ENCODE measurements at regions of chr9 and their contacts with region 1.

Region 1: DNA sequence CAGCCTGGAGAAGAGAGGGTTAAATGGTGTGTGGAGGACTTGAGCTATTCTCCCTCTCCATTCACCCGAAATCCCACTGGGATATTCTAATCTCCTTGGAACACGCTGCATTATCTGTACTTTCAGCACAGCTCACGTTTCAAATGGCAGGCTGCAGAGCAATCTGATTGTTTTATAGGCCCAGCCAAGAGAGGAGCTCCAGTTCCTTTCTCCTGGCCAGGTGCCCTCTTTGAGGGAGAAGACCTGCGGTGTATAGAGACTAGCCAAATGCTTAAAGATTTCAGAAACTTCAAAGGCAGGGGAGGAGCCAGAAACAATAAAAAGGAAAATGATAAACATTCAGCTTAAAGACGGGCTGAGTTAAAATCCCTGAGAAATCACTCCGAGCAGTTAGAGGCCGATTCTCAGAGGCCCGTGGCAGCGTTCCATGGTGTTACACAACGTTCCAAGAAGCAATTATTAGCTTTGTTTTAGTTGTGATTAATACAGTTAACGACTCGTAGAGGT is 564.0 kb upstream of the KLF4 start:
- DNase-seq: peak; percentile 92
- H3K4me3 ChIP-seq: no peak overlapping the region
- H3K27ac ChIP-seq: peak overlapping the region; percentile 59 to 77 (median 74)
- H3K4me1 ChIP-seq: peaks cover 0 to 68% (median 57%) of the 10 kb centered on the region in 4 donors
- H3K27me3 ChIP-seq: no peaks in the 10 kb centered on the region
- CTCF ChIP-seq: no peak
- EP300 ChIP-seq: peak in 2 of 4 donors; percentile 45 to 56
- POLR2A ChIP-seq: no peak

Region 2: DNA sequence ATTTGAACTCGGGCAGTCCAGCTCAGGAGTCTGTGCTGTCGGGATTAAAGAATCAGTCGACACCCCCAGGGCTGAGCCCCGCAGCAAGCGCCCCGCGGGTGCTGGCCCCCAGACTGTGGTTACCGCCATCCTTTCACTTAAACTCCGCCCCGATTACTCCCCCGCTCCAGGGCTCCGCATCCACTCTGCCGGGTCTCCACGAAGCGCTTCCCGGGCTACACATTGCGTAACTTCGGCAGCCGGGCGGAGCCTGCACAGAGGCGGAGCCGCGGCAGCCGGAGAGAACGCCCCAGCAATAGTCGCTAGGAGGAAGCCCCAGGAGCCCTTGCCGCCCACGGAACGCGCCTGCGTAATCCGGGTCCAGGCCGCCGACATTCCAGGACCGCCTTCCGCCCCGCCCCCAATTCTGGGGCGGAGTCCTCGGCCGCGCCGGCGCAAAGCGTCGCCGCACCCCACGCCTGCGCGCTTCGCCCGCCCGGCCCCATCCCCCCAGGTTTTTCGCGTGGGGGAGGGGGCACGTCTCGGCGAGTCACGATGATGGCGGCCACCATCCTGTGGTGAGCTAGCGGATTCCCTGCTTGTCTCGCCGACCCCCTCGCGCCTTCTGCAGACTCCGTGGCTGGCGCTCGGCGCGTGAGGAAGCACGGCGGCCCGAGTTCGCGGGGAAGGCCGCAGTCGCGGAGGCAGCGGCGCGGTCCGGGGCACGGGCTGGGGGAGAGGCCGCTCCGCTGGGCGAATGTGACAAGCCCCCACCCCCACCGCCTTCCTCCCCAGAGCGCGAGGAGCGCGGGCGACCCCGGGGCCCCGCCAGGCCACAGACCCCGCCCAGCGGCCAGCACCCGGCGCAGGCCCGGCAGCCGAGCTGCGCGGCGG is 770.6 kb before region 1 on chr9 and contains the start of gene RAD23B:
- intact Hi-C with region 1: loop called (anchors 10 kb)
- DNase-seq: peak; percentile 99
- H3K4me3 ChIP-seq: peak within 1 kb of the TSS; percentile 94 to 99 (median 96)
- H3K27ac ChIP-seq: peak within 1 kb of the TSS; percentile 99 to 100 (median 99)
- H3K4me1 ChIP-seq: peaks cover 0 to 45% (median 31%) of the 10 kb centered on the region in 4 donors
- H3K27me3 ChIP-seq: no peaks in the 10 kb centered on the region
- CTCF ChIP-seq: no peak
- EP300 ChIP-seq: peak in 2 of 4 donors; percentile 11 to 39
- POLR2A ChIP-seq: peak; percentile 74 to 81
- total RNA-seq, gene RAD23B: 61.9 to 74.3 (median 66.4) TPM

Region 3: DNA sequence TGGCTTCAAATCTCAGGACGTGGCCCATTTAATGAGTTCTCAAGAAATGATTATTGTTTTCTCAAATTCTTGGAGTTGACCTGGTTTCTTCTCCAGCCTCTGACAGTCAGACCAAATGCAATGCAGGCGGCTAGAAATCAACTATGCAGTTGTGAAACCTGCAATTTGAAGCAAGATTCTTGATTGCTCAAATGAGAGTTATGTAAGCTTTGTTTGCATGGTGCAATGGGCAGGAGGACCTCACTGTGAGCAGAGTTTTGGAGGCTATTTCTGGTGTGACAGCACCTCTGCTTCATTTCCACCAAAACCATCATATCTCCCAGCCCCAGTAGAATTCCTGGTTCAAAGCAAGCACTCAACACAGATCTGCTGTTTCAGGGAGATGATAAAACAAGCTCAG is 64.1 kb before region 1 on chr9:
- intact Hi-C with region 1: no loop called
- DNase-seq: peak; percentile 68
- H3K4me3 ChIP-seq: no peak overlapping the region
- H3K27ac ChIP-seq: peak overlapping the region in 2 of 4 donors; percentile 3 to 44
- H3K4me1 ChIP-seq: no peaks in the 10 kb centered on the region
- H3K27me3 ChIP-seq: no peaks in the 10 kb centered on the region
- CTCF ChIP-seq: no peak
- EP300 ChIP-seq: no peak
- POLR2A ChIP-seq: no peak

Region 4: DNA sequence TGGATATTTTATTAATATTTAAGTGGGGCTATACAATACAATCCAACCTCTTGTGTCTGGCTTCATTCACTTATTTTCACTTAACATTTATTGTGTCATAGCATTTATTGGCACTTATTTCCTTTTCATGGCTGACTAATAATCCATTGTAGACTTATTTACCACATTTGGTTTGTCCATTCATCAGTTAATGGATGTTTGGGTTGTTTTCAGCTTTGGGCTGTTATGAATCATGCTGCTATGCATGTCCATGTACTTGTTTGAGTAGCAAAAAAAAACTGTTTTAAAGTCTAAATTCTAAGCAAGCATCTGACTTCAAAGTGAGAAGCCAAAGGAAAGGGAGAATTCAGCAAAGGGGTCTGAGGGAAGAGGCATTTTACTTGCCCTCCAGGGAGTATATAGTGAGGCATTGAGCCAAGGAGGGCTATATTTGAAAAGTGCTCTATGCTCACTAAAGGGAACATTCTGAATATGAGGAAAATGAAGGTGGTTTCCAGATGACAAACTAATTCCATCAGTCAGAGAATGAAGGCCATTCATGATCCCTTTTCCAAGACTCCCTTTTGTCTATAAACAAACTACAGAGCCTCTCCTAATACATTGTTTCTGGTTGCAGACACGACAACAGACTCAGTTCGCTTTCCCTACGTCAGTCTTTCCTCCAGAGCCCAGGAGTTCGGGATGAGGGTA is 31.2 kb before region 1 on chr9:
- intact Hi-C with region 1: no loop called
- DNase-seq: no peak
- H3K4me3 ChIP-seq: no peak overlapping the region
- H3K27ac ChIP-seq: no peak overlapping the region
- H3K4me1 ChIP-seq: no peaks in the 10 kb centered on the region
- H3K27me3 ChIP-seq: no peaks in the 10 kb centered on the region
- CTCF ChIP-seq: no peak
- EP300 ChIP-seq: no peak
- POLR2A ChIP-seq: no peak

Region 5: DNA sequence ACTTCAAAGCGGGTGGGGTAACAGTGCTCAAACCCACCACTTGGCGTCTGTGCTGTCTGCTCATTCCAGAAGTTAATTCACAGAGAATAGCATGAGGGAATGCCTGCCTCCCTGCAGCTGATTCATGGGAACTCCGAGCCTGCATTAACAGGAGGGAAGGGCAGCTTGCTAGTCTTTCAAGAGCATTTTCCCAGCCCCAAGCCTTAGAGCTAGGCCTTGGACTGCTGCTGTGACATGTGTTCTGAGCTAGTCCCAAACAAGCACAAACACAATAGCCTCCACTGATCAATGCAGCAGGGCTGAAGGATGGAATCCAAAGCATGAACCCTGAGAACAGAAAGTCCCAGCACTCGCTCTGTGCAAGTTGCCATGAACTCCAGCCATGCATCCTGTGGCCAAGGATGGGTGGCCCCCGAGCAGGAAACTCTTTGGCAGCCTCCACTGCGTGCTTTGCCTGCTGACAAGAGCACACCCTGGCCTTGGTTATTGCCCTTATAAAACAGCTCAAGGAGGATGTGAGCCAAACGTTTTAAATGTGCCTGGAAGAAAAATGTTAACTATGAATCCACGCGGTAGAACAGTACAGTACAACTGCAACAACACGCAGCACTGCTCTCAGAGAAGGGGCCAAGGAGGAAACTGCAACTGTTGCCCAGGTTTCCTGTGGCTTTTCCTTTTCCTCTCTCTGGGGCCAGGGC is 89.0 kb after region 1 on chr9:
- intact Hi-C with region 1: loop called (anchors 2 kb)
- DNase-seq: peak; percentile 97
- H3K4me3 ChIP-seq: no peak overlapping the region
- H3K27ac ChIP-seq: peak overlapping the region; percentile 77 to 92 (median 84)
- H3K4me1 ChIP-seq: peaks cover 0 to 25% (median 24%) of the 10 kb centered on the region in 4 donors
- H3K27me3 ChIP-seq: no peaks in the 10 kb centered on the region
- CTCF ChIP-seq: peak in 1 of 4 experiments; percentile 51
- EP300 ChIP-seq: peak; percentile 34 to 97 (median 85)
- POLR2A ChIP-seq: no peak

Region 6: GRCh38 chr9:108521063-108521590 is 467.5 kb after region 1 on chr9:
- intact Hi-C with region 1: no loop called
- DNase-seq: no peak
- H3K4me3 ChIP-seq: no peak overlapping the region
- H3K27ac ChIP-seq: no peak overlapping the region
- H3K4me1 ChIP-seq: peaks cover 0 to 12% (median 5%) of the 10 kb centered on the region in 4 donors
- H3K27me3 ChIP-seq: no peaks in the 10 kb centered on the region
- CTCF ChIP-seq: no peak
- EP300 ChIP-seq: no peak
- POLR2A ChIP-seq: no peak

Measured in sigmoid colon (tissue), 7 donors.